ENCODE measurements at regions of chr14 and their contacts with region 1.

Region 1: GRCh38 chr14:68695326-68695768 is 97.5 kb downstream of the ZFP36L1 start:
- DNase-seq: peak; percentile 86 to 100
- H3K4me3 ChIP-seq: no peak overlapping the region
- H3K27ac ChIP-seq: peak overlapping the region; percentile 93
- H3K4me1 ChIP-seq: peaks cover 47% of the 10 kb centered on the region
- H3K27me3 ChIP-seq: no peaks in the 10 kb centered on the region
- CTCF ChIP-seq: no peak

Region 2: DNA sequence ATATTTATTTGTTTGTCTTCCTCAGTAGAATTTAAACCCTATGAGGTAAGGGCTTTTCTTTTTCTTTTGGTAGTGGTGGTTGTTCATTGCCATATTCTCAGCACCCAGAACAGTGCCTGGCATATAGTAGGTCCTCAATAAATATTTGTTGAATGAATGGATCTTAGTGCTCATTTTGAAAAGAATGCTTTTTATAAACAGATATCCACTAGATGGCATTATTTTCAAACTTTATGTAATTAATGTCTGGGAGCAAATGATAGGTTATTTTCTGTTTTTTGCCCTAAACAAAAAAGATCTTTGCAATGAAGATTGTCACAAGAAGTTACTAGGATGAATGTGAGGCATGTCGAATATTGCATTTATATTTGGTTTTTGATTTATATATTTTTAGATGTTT is 811.6 kb before region 1 on chr14:
- CTCF ChIA-PET with region 1: no interaction called
- POLR2A ChIA-PET with region 1: interaction called, 46 read pairs
- intact Hi-C with region 1: no loop called
- DNase-seq: peak in 1 of 2 experiments; percentile 43
- H3K4me3 ChIP-seq: no peak overlapping the region
- H3K27ac ChIP-seq: no peak overlapping the region
- H3K4me1 ChIP-seq: no peaks in the 10 kb centered on the region
- H3K27me3 ChIP-seq: no peaks in the 10 kb centered on the region
- CTCF ChIP-seq: peak; percentile 64